Activated CD4-positive, alpha-beta T cell treated with anti-CD3 and anti-CD28 coated beads, Interleukin-2, amount 10 ng/mL, durations not matched to agents 24 days and 14 days (primary cell): ENCODE measurements at regions of chr16 and their contacts with region 1.

Region 1: DNA sequence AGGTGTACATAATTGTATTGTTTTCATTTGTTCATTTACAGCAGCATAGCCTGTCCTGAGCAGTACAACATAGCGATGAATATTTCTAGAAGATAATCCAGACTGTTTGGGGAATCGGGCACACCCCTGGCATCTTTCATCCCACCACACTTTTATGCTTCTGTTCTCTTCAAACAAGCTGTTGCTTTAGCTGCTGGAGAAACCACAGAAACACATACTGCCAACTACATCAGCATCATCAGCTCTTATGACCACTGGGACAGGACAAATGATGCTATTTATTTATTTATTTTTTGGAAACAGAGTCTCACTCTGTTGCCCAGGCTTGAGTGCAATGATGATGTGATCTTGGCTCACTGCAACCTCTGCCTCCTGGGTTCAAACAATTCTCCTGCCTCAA is 22.6 kb upstream of the HAPSTR1 start:
- DNase-seq: no peak
- H3K4me3 Mint-ChIP-seq: no peak overlapping the region
- H3K27ac Mint-ChIP-seq: no peak overlapping the region
- H3K4me1 Mint-ChIP-seq: peaks cover 15% of the 10 kb centered on the region
- H3K27me3 Mint-ChIP-seq: no peaks in the 10 kb centered on the region

Region 2: GRCh38 chr16:9079430-9079812 is 10.5 kb after region 1 on chr16:
- intact Hi-C with region 1: loop called (anchors 1 kb)
- DNase-seq: no peak
- H3K4me3 Mint-ChIP-seq: no peak overlapping the region
- H3K27ac Mint-ChIP-seq: peak overlapping the region; percentile 71
- H3K4me1 Mint-ChIP-seq: peaks cover 27% of the 10 kb centered on the region
- H3K27me3 Mint-ChIP-seq: no peaks in the 10 kb centered on the region